PC-9 (cell line): ENCODE measurements at regions of chr11 and their contacts with region 1.

Region 1: DNA sequence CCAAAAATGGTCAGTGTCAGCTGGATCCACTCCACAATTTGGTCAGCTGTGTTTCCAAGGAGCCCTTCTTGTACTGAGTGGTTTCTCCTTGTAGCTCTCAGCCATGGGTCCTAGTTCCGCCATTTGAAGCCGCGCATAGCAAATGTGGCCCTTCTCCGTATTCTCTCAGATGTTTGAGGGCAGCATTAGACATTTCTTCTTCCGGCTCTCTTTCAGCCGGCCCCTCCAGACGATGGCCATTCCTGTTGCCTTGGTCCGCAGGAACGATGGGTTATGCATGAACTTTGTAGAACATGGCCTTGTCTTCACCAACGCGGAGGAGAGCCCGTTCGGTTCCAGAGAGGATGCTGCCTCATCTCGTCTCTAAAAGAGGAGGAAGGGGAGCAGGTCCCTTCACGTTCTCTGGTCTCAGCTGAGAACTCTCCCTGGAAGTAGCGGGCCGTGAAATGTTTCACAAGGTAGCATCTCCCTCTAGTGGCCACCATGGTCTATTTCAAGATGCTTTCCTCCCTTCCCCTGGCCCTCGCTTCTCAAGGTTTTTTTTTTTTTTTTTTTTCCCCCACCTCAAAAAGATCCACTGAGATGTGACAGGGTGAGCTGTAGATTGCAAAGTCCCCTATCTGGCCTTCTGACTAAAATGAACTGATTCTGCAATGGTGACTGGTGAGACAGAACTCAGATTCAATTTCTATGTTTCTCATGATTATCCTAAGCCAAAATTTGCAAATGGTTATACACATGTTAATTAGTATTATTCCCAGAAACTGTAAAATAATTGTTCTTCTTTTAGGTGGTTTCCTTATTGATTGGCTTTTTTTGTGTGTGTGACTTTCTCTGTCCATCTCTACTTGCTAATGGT is 19.8 kb upstream of the PLET1 start:
- DNase-seq: peak; percentile 54 to 73
- H3K4me3 ChIP-seq: peak overlapping the region; percentile 34
- H3K27ac ChIP-seq: no peak overlapping the region
- H3K4me1 ChIP-seq: peaks cover 15% of the 10 kb centered on the region
- H3K27me3 ChIP-seq: no peaks in the 10 kb centered on the region
- CTCF ChIP-seq: peak; percentile 81

Region 2: DNA sequence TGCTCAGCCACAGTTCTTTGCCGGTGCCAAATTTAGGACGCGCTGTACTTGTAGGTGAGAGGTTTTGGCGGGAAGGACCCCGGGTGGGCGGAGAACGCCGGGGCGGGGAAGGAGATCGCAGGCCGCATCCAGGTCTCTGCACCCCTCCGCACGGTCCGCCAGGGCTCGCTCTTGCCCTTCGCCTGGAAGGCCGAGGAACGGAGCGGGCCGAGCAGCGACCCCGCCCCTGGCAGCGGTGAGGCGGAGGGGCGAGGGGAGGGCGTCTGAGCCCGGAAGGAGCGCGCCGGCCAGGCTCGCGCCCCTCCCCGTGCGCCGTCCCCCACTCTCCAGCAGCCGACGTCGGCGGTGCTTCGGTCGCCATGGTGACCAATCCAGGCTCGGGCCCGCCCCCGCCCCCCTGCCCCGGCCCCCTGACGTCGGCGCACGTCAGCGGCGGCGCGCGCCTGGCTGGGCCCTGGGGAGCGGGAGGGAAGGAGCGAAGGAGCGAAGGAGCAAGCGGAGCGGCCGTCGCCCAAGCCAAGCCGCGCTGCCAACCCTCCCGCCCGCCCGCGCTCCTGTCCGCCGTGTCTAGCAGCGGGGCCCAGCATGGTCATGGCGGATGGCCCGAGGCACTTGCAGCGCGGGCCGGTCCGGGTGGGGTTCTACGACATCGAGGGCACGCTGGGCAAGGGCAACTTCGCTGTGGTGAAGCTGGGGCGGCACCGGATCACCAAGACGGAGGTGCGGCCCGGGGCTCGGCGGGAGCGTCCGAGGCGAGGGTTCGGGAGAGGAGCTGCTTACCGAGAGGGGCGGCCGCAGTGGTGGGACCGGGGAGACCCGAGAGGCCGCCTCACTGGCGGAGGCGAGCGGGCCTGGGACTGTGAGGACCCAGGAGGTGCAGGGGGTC is 678.3 kb before region 1 on chr11 and contains the start of gene SIK2:
- CTCF ChIA-PET with region 1: no interaction called
- POLR2A ChIA-PET with region 1: interaction called, 3 read pairs
- intact Hi-C with region 1: loop called (anchors 2 kb)
- DNase-seq: peak; percentile 90 to 95
- H3K4me3 ChIP-seq: peak within 1 kb of the TSS; percentile 89
- H3K27ac ChIP-seq: peak within 1 kb of the TSS; percentile 60
- H3K4me1 ChIP-seq: peaks cover 43% of the 10 kb centered on the region
- H3K27me3 ChIP-seq: no peaks in the 10 kb centered on the region
- CTCF ChIP-seq: peak; percentile 78
- total RNA-seq, gene SIK2: 16.2 and 16.6 TPM in 2 replicates

Region 3: GRCh38 chr11:111935317-111936039 is 345.0 kb before region 1 on chr11:
- CTCF ChIA-PET with region 1: no interaction called
- POLR2A ChIA-PET with region 1: no interaction called
- intact Hi-C with region 1: loop called (anchors 1 kb)
- DNase-seq: no peak
- H3K4me3 ChIP-seq: no peak overlapping the region
- H3K27ac ChIP-seq: no peak overlapping the region
- H3K4me1 ChIP-seq: 0 out of 2 replicates have a peak, but pooled peaks cover 8% of the 10 kb centered on the region
- H3K27me3 ChIP-seq: 0 out of 2 replicates have a peak, but pooled peaks cover 3% of the 10 kb centered on the region
- CTCF ChIP-seq: no peak

Region 4: DNA sequence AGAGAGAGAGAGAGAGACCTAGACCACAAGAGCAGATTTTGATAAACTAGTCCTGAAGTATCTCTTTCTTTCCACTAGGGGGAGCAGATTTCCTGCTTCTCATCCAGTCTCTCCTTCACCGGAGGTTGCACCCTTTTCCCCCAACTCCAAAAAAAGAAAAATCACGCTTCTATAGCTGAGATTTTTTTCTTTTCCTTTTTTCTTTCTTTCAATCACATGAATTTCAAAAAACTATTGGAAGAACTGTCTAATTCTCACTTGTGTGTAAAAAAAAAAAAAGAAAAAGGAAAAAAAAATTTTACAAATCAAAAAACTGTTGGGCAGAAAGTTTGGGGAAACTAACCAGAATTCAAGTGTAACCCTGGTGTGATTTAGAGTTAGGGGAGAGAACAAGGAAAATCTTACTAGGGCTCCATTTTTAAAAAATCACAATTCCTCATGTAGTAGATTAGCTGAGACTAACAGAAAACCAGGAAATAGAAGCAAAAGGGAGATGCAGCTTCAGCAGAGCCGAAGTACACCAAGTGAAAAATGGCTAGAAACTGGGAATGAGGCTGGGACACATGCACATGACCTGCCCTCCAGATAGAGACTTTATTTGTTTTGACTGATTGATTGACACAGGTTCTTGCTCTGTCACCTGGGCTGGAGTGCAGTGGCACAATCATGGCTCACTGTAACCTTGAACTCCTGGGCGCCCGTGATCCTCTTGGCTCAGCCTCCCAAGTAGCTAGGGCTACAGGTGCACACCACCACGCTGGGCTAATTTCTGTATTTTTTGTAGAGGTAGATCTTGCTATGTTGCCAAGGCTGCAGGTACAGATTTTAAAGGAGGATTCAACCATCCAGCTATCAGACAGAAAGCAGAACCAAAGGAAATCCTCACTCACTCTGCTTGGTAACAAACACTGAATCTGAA is 166.7 kb before region 1 on chr11:
- CTCF ChIA-PET with region 1: interaction called, 20 read pairs
- POLR2A ChIA-PET with region 1: no interaction called
- intact Hi-C with region 1: loop called (anchors 2 kb)
- DNase-seq: peak; percentile 5 to 66
- H3K4me3 ChIP-seq: no peak overlapping the region
- H3K27ac ChIP-seq: no peak overlapping the region
- H3K4me1 ChIP-seq: peaks cover 3% of the 10 kb centered on the region; the same call in 1 of the 2 replicates
- H3K27me3 ChIP-seq: no peaks in the 10 kb centered on the region
- CTCF ChIP-seq: peak; percentile 93

Region 5: DNA sequence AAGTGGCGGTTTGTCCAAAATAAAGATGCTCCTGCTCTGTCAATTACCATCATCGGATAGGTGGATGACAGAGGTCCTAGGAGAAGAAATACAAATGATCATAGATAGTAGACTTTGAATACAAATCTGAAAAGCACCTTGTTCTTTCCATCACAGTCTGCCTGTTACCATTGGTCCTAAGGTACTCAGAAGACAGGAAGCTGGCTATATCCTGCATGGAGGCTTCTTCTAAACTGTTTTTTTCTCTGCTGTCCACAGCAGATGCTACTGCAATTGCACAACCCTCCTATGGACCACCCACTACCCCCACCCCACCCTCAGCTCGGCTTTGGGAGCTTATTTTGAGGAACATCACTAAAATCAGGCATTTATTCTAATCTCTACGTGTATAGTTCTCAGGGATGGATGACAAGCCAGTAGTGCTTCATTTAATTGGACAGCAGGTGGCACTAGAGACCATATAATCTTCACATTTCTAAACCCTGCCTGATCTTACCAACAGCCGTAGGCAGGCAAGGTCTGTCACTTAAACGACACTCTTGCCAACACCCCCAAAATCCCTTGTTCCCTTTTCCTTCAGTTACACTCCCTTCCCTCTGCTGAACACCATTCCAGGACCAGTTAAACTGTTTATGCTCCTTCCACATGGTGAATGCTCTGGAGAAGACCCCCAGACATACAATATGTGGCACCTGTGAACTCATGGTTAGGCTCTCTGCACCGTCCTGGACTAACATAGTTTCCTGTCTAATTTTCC is 60.8 kb before region 1 on chr11:
- CTCF ChIA-PET with region 1: interaction called, 26 read pairs
- POLR2A ChIA-PET with region 1: no interaction called
- intact Hi-C with region 1: loop called (anchors 1 kb)
- DNase-seq: peak; percentile 25 to 67
- H3K4me3 ChIP-seq: no peak overlapping the region
- H3K27ac ChIP-seq: no peak overlapping the region
- H3K4me1 ChIP-seq: peaks cover 28% of the 10 kb centered on the region
- H3K27me3 ChIP-seq: no peaks in the 10 kb centered on the region
- CTCF ChIP-seq: peak; percentile 85

Region 6: GRCh38 chr11:112226062-112226830 is 54.3 kb before region 1 on chr11 and contains the start of gene PTS:
- CTCF ChIA-PET with region 1: interaction called, 26 read pairs
- POLR2A ChIA-PET with region 1: no interaction called
- intact Hi-C with region 1: loop called (anchors 2 kb)
- DNase-seq: peak; percentile 82 to 83
- H3K4me3 ChIP-seq: peak within 1 kb of the TSS; percentile 98
- H3K27ac ChIP-seq: peak within 1 kb of the TSS; percentile 76
- H3K4me1 ChIP-seq: peaks cover 17% of the 10 kb centered on the region
- H3K27me3 ChIP-seq: no peaks in the 10 kb centered on the region
- CTCF ChIP-seq: no peak
- total RNA-seq, gene PTS: 37.6 and 43.0 TPM in 2 replicates

Region 7: DNA sequence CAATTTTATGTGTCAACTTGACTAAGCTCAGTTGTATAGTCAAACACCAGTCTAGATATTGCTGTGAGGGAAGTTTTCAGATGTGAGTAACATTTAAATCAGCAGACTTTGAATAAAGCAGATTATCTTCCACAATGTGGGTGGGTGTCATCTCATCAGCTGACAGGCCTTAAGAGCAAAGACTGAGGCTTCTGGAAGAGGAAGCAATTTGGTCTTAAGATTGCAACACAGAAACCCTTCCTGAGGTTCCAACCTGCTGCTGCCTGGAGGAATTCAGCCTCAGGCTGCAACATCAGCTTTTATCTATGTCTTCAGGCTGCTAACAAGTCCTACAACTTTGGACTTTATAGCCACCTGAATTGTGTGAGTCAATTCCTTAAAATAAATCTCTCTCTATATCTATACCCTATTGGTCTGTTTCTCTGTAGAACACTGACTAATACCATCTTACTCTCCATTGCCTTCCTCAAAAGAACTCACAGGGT is 257.4 kb after region 1 on chr11:
- CTCF ChIA-PET with region 1: no interaction called
- POLR2A ChIA-PET with region 1: no interaction called
- intact Hi-C with region 1: no loop called
- DNase-seq: peak; percentile 25 to 96
- H3K4me3 ChIP-seq: no peak overlapping the region
- H3K27ac ChIP-seq: peak overlapping the region; percentile 72
- H3K4me1 ChIP-seq: peaks cover 48% of the 10 kb centered on the region
- H3K27me3 ChIP-seq: no peaks in the 10 kb centered on the region
- CTCF ChIP-seq: no peak